H1 (cell line): ENCODE measurements at regions of chr19 and their contacts with region 1.

Region 1: DNA sequence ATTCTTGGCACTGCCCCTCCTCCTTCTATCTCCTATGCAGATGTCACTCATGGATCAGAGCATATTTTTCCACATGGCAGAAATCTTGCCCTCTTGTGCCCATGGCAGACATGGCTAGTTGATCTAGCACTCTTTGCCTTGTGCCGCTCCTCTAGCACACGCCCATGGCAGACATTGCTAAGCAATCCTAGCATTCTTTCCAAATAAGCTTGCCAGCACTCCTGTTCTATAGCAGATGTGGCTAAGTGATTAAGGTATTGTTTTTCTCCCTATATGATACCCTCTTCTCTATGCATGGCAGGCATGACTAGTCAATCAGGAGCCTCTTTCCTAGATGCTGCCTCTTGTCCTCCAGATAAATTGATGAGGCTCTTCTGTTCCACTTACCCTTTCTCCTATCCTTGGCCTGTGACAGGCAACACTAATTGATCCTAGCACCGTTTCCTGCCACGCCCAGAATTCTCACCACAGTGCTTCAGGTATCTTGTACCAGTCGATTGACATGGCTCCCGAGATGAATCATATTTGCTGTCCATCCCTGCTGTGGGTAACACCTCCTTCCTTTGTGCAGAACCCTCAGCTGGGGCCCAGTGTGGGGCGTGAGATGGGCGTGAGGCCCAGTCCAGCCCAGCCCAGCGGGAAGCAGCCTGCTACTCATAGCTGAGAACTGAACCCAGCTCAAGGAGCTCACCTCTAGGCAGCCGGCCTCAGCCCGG is 26.9 kb downstream of the TMED1 start:
- DNase-seq: no peak
- H3K4me3 ChIP-seq: no peak overlapping the region
- H3K27ac ChIP-seq: no peak overlapping the region; the same call in 1 of the 2 replicates
- H3K4me1 ChIP-seq: no peaks in the 10 kb centered on the region
- H3K27me3 ChIP-seq: no peaks in the 10 kb centered on the region
- CTCF ChIP-seq: no peak
- EP300 ChIP-seq: no peak
- POLR2A ChIP-seq: no peak
- RAD21 ChIP-seq: no peak

Region 2: DNA sequence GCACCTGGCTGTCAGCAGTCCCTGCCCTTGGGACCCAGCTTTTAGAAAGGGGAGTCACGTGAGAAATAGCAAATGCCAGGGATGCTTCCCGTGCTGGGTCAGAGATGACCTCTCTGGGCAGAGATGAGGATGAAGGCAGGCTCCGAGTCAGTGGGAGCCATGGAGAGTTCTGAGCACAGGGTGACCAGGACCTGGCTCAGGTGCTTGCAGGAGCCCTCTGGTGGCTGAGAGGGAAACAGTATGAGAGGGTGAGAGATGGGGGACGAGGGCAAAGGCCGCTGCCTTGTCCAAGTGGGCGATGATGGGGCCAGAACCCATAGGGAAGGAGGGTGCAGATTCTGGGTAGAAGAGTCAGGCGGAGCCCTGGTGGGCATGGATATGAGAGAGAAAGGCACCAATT is 11.1 kb after region 1 on chr19:
- CTCF ChIA-PET with region 1: interaction called, 14 read pairs
- POLR2A ChIA-PET with region 1: interaction called, 3 read pairs
- DNase-seq: no peak
- H3K4me3 ChIP-seq: no peak overlapping the region
- H3K27ac ChIP-seq: no peak overlapping the region
- H3K4me1 ChIP-seq: no peaks in the 10 kb centered on the region; a peak in 1 of 7 replicates
- H3K27me3 ChIP-seq: no peaks in the 10 kb centered on the region
- CTCF ChIP-seq: peak; percentile 45 to 59 (median 59)
- EP300 ChIP-seq: no peak
- POLR2A ChIP-seq: no peak
- RAD21 ChIP-seq: peak; percentile 19 to 39; a peak in 3 of 4 replicates